Activated CD4-positive, alpha-beta T cell treated with anti-CD3 and anti-CD28 coated beads for 36 hours (primary cell): ENCODE measurements at regions of chr11 and their contacts with region 1.

Region 1: DNA sequence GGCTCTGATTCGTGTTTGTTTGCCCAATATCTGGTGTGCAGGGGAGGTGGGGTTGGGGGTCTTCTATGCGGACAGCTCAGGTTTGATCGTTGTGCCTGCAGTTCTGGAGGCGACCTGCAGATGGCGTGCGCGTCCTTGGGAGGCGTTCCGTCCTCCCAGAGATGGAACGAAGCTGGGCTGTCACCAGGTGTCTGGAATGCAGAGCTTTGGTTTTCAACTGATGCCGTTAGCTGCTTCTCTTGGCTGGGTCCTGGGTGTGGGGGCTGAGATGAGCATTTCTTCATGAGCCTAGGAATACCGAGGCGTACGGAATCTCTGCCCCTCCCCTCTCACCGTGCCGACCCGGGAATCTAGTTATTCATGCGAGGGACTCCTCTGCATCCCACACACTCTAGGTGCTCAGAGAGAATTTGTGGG is 98.6 kb downstream of the CEP164 start:
- DNase-seq: peak; percentile 86
- ATAC-seq: peak; percentile 78
- H3K4me3 Mint-ChIP-seq: no peak overlapping the region
- H3K27ac Mint-ChIP-seq: no peak overlapping the region
- H3K4me1 Mint-ChIP-seq: peaks cover 7% of the 10 kb centered on the region
- H3K27me3 Mint-ChIP-seq: no peaks in the 10 kb centered on the region

Region 2: DNA sequence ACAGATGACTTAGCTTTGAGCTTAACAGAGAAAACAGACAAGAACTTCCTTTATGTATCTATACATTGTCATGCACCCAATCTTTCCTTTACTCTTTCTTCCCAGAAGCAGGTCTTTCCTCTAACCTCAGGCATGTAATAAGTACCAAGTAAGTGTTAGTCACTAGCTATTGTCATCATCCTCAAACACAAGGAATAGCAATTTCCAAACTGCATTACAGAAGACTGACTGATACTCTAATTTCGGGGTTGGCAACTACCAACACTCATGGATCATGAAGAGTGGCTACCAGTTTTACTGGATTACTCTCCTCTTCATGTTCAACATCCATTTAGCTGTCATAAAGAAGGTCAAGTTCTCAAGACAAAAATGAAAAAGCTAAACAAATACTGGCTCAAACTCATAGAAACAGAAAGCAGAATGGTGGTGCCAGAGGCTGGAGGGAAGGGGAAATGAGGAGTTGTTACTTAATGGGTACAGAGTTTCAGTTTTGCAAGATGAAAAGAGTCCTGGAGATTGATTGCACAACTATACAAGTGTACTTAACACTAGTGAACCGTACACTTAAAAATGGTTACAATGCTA is 439.7 kb before region 1 on chr11:
- CTCF ChIA-PET with region 1: no interaction called
- POLR2A ChIA-PET with region 1: no interaction called
- intact Hi-C with region 1: no loop called
- DNase-seq: peak; percentile 31
- ATAC-seq: peak; percentile 82
- H3K4me3 Mint-ChIP-seq: peak overlapping the region; percentile 30
- H3K27ac Mint-ChIP-seq: peak overlapping the region; percentile 76
- H3K4me1 Mint-ChIP-seq: peaks cover 71% of the 10 kb centered on the region
- H3K27me3 Mint-ChIP-seq: no peaks in the 10 kb centered on the region

Region 3: DNA sequence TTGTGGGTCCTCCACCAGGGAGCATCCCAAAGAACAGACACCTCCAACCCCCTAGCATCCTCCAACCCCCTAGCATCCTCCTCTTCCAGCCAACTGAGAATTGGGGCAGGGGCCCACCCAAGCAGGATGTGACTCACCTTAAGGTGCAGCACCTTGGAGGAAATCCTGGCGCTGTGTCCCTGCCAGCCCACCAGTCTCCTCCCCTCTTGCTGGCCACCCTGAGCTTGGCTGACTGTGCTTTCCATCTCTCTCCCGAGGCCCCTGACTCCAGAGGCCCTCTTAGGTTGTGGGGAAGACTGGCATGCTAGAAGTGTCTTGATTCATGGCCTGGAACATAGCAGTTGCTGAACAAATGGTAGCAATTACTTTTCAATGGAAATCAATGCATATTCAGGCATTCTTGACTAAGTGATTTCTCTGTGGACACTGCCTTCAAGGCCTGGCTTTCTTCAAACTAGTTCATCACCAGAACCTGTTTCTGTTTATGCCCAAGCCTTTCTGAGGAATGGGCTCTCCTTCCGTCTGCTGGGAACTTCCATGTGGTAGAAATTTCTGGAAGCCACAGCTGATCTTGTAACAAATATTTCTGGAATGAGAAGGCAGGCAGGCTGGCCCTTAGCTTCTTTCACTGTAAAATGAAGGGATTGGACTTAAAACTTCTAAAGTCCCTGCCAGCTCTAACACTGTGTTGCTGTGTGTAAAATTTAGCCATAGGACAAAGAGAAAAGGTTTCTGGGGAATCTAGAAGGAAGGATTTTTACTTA is 38.1 kb before region 1 on chr11:
- CTCF ChIA-PET with region 1: no interaction called
- POLR2A ChIA-PET with region 1: no interaction called
- intact Hi-C with region 1: no loop called
- DNase-seq: no peak
- ATAC-seq: no peak
- H3K4me3 Mint-ChIP-seq: no peak overlapping the region
- H3K27ac Mint-ChIP-seq: no peak overlapping the region
- H3K4me1 Mint-ChIP-seq: no peaks in the 10 kb centered on the region
- H3K27me3 Mint-ChIP-seq: no peaks in the 10 kb centered on the region

Region 4: DNA sequence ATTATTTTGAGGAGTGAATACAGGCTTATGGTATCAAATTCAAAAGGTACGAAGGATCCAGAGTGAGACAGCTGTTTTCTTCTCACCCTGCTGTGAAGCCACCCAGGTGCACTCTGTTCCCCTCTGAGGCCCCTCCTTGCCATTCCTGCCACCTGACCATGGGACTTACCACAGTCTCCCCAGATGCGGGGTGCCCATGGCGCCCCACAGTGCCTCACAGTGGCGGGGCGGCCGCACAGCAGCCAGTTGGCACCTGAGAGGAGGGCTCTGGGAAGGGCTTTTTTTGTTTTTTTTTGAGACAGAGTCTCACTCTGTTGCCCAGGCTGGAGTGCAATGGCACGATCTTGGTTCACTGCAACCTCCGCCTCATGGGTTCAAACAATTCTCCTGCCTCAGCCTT is 53.1 kb after region 1 on chr11:
- CTCF ChIA-PET with region 1: interaction called, 15 read pairs
- POLR2A ChIA-PET with region 1: no interaction called
- intact Hi-C with region 1: loop called (anchors 1 to 5 kb)
- DNase-seq: peak; percentile 48
- ATAC-seq: peak; percentile 75
- H3K4me3 Mint-ChIP-seq: no peak overlapping the region
- H3K27ac Mint-ChIP-seq: no peak overlapping the region
- H3K4me1 Mint-ChIP-seq: no peaks in the 10 kb centered on the region
- H3K27me3 Mint-ChIP-seq: no peaks in the 10 kb centered on the region

Region 5: DNA sequence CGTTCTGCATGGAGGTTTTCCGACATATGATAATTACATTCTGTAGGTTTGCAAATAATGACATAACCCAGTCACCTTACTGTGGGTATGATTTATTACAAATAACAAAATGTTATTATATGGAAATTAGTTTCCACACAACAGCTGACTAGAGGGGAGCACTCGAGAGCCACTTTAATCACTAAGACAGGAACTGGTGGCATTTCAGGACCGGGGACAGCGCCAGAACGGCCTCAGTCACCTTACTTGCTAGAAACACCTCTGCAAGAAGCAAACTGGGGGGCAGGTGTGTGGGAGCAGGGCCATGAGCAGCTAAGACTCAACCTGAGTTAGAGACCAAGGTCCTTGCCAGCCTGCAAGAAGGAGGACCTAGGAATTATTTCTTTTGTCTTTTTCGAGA is 170.8 kb after region 1 on chr11:
- CTCF ChIA-PET with region 1: no interaction called
- POLR2A ChIA-PET with region 1: no interaction called
- intact Hi-C with region 1: loop called in 1 of 2 experiments (anchors 10 kb)
- DNase-seq: peak; percentile 75
- ATAC-seq: no peak
- H3K4me3 Mint-ChIP-seq: no peak overlapping the region
- H3K27ac Mint-ChIP-seq: no peak overlapping the region
- H3K4me1 Mint-ChIP-seq: no peaks in the 10 kb centered on the region
- H3K27me3 Mint-ChIP-seq: peaks cover 17% of the 10 kb centered on the region

Region 6: DNA sequence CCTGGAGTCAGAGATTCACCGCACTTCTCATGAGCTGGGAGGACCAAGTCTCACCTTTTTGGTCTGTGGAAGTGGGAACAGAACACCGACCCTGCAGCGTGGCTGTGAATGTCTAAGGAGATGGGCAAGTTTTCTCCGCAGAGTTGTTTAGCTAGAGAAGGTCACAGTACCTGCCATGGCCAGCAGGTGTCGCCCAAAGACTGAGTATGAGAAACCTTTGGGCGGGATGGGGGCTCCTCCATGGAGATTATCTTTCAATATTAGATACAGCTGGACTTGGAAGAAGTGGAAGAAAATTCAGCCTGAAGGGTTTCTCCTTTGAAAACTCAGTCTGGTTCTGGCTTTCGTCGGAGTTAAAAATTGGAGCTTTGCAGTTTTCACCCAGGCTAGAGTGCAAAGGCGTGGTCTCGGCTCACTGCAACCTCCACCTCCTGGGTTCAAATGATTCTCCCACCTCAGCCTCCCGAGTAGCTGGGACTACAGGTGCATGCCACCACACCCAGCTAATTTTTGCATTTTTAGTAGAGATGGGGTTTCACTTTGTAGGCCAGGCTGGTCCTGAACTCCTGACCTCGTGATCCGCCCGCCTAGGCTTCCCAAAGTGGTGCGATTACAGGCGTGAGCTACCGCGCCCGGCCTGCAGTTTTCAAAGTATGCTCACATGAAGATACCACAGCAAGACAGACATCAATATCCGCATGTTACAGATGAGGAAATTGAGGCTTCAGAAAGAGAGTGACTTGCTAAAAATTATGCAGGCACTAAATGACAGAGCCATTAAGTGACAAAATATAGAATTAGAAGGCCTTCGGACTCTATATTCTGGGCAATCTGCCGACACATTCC is 381.4 kb after region 1 on chr11:
- CTCF ChIA-PET with region 1: interaction called, 9 read pairs
- POLR2A ChIA-PET with region 1: no interaction called
- intact Hi-C with region 1: loop called (anchors 1 to 5 kb)
- DNase-seq: peak; percentile 87
- ATAC-seq: peak; percentile 56
- H3K4me3 Mint-ChIP-seq: no peak overlapping the region
- H3K27ac Mint-ChIP-seq: no peak overlapping the region
- H3K4me1 Mint-ChIP-seq: peaks cover 15% of the 10 kb centered on the region
- H3K27me3 Mint-ChIP-seq: peaks cover 3% of the 10 kb centered on the region